GM12878 (cell line): ENCODE measurements at regions of chr6 and their contacts with region 1.

Region 1: GRCh38 chr6:163413345-163414116 is 987 bp upstream of the QKI start:
- DNase-seq: no peak
- ATAC-seq: peak; percentile 71
- H3K4me3 ChIP-seq: peak overlapping the region; percentile 70
- H3K27ac ChIP-seq: peak overlapping the region; percentile 63
- H3K4me1 ChIP-seq: no peaks in the 10 kb centered on the region; the same call in 1 of the 2 replicates
- H3K27me3 ChIP-seq: no peaks in the 10 kb centered on the region
- CTCF ChIP-seq: no peak
- EP300 ChIP-seq: no peak
- POLR2A ChIP-seq: peak; percentile 83
- RAD21 ChIP-seq: no peak

Region 2: DNA sequence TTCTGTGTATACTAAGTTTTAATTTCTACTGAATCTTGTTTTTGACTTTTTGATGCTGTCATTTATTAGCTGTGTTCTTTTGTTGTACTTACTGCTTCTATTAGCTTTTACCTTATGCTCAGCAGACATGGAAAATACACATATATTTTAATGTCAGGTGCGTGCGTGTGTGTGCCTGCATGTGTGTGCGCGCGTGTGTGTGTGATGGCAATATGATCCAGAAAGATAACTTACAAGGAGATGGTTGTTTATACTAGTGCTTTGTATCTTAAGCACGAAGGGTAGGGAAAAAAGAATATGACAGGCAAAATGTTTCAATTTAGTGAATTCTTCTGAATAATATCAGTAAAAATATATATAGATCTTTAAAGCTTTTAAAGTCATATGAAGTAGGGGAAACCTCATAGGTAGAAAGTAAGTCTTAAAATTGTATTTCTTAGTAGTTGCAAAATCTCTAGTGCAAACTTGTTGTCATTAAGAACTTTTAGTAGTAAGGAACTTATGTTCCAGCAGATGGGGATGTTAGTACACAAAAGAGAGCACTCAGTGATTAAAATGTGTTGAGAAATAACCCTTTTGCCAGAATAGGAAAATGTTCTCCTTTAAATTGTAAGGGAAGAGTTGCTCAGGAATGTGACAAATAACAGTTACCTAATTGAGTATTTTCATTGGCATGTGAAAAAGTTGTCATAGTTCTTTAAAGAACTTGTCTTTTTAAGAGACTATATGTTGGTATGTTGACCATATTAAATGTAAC is 14.1 kb after region 1 on chr6:
- CTCF ChIA-PET with region 1: interaction called, 33 read pairs
- POLR2A ChIA-PET with region 1: interaction called, 5 read pairs
- RAD21 ChIA-PET with region 1: interaction called, 9 read pairs
- SMC1A ChIA-PET with region 1: interaction called, 25 read pairs
- in situ Hi-C with region 1: no loop called
- intact Hi-C with region 1: no loop called
- DNase-seq: no peak
- ATAC-seq: peak; percentile 45; the same call in 2 of the 3 replicates
- H3K4me3 ChIP-seq: no peak overlapping the region
- H3K27ac ChIP-seq: no peak overlapping the region
- H3K4me1 ChIP-seq: no peaks in the 10 kb centered on the region
- H3K27me3 ChIP-seq: no peaks in the 10 kb centered on the region
- CTCF ChIP-seq: peak in 1 of 3 experiments; percentile 52; a peak in 2 of 6 replicates
- EP300 ChIP-seq: no peak
- POLR2A ChIP-seq: no peak
- RAD21 ChIP-seq: peak; percentile 76

Region 3: DNA sequence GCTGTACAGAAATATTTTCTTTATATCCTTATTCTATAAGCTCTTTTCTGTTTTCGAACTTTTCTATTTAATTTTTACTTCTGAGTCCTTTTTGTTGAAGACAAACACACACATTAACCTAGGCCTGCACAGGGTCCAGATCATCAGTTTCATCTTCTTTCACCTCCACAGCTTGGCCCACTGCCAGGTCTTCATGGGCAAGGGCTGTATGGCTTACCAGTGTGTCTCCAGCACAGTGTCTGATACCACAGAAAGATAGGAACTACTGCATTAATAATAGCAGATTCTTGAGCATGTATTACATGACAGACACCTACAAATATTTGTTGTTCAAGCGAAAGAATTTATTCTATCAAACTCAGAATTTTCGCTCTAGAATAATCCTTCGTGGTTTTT is 25.4 kb after region 1 on chr6:
- CTCF ChIA-PET with region 1: interaction called, 10 read pairs
- POLR2A ChIA-PET with region 1: no interaction called
- RAD21 ChIA-PET with region 1: interaction called, 3 read pairs
- SMC1A ChIA-PET with region 1: interaction called, 34 read pairs
- in situ Hi-C with region 1: no loop called
- intact Hi-C with region 1: no loop called
- DNase-seq: no peak
- ATAC-seq: peak; percentile 73
- H3K4me3 ChIP-seq: no peak overlapping the region
- H3K27ac ChIP-seq: no peak overlapping the region
- H3K4me1 ChIP-seq: peaks cover 5% of the 10 kb centered on the region; the same call in 1 of the 2 replicates
- H3K27me3 ChIP-seq: no peaks in the 10 kb centered on the region
- CTCF ChIP-seq: no peak
- EP300 ChIP-seq: no peak
- POLR2A ChIP-seq: no peak
- RAD21 ChIP-seq: no peak

Region 4: GRCh38 chr6:163554663-163555062 is 141.1 kb after region 1 on chr6:
- CTCF ChIA-PET with region 1: interaction called, 56 read pairs
- POLR2A ChIA-PET with region 1: interaction called, 4 read pairs
- RAD21 ChIA-PET with region 1: interaction called, 26 read pairs
- SMC1A ChIA-PET with region 1: interaction called, 39 read pairs
- in situ Hi-C with region 1: no loop called
- intact Hi-C with region 1: loop called (anchors 5 kb)
- DNase-seq: no peak
- ATAC-seq: peak; percentile 84
- H3K4me3 ChIP-seq: no peak overlapping the region
- H3K27ac ChIP-seq: no peak overlapping the region
- H3K4me1 ChIP-seq: no peaks in the 10 kb centered on the region; the same call in 1 of the 2 replicates
- H3K27me3 ChIP-seq: no peaks in the 10 kb centered on the region
- CTCF ChIP-seq: peak; percentile 49 to 55 (median 51); a peak in 5 of 6 replicates
- EP300 ChIP-seq: no peak
- POLR2A ChIP-seq: no peak
- RAD21 ChIP-seq: peak; percentile 66

Region 5: GRCh38 chr6:163707401-163708355 is 294.1 kb after region 1 on chr6:
- CTCF ChIA-PET with region 1: no interaction called
- POLR2A ChIA-PET with region 1: no interaction called
- RAD21 ChIA-PET with region 1: no interaction called
- SMC1A ChIA-PET with region 1: no interaction called
- in situ Hi-C with region 1: no loop called
- intact Hi-C with region 1: loop called (anchors 5 kb)
- DNase-seq: no peak
- ATAC-seq: peak; percentile 71
- H3K4me3 ChIP-seq: peak overlapping the region; percentile 42; the same call in 1 of the 2 replicates
- H3K27ac ChIP-seq: peak overlapping the region; percentile 68
- H3K4me1 ChIP-seq: peaks cover 95% of the 10 kb centered on the region
- H3K27me3 ChIP-seq: no peaks in the 10 kb centered on the region
- CTCF ChIP-seq: peak; percentile 5 to 60 (median 55); a peak in 3 of 6 replicates
- EP300 ChIP-seq: no peak
- POLR2A ChIP-seq: no peak
- RAD21 ChIP-seq: peak; percentile 50

Region 6: DNA sequence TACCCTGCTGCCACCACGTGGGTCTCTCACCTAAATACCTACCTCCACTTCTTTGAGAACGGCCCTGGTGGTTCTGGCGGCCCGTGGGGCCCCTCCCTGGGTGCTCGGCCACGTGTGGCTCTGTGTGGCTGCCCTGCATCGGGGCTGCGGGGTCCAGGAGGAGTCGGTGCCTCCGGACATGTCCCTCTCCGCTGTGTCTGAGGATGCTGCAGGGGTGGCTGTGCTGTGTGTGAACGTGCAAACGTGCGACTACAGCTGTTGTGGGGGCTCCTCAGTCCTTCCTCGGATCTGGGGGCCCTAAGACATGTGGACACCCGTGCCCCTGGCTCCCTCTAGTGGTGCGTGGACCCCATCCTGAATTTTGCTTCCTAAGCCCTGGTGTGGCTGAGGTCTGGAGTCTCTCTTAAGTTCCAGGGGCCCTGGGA is 692.8 kb after region 1 on chr6:
- CTCF ChIA-PET with region 1: no interaction called
- POLR2A ChIA-PET with region 1: no interaction called
- RAD21 ChIA-PET with region 1: no interaction called
- SMC1A ChIA-PET with region 1: no interaction called
- in situ Hi-C with region 1: no loop called
- intact Hi-C with region 1: loop called (anchors 10 kb)
- DNase-seq: no peak
- ATAC-seq: peak; percentile 66
- H3K4me3 ChIP-seq: no peak overlapping the region
- H3K27ac ChIP-seq: no peak overlapping the region
- H3K4me1 ChIP-seq: no peaks in the 10 kb centered on the region
- H3K27me3 ChIP-seq: no peaks in the 10 kb centered on the region
- CTCF ChIP-seq: peak; percentile 27 to 38 (median 36); a peak in 3 of 6 replicates
- EP300 ChIP-seq: no peak
- POLR2A ChIP-seq: no peak
- RAD21 ChIP-seq: peak; percentile 51

Region 7: GRCh38 chr6:164927288-164928056 is 1513.9 kb after region 1 on chr6:
- CTCF ChIA-PET with region 1: no interaction called
- POLR2A ChIA-PET with region 1: no interaction called
- RAD21 ChIA-PET with region 1: no interaction called
- SMC1A ChIA-PET with region 1: no interaction called
- in situ Hi-C with region 1: no loop called
- intact Hi-C with region 1: loop called (anchors 5 kb)
- DNase-seq: no peak
- ATAC-seq: peak; percentile 99
- H3K4me3 ChIP-seq: no peak overlapping the region
- H3K27ac ChIP-seq: no peak overlapping the region
- H3K4me1 ChIP-seq: no peaks in the 10 kb centered on the region
- H3K27me3 ChIP-seq: no peaks in the 10 kb centered on the region
- CTCF ChIP-seq: peak; percentile 65 to 97 (median 84)
- EP300 ChIP-seq: no peak
- POLR2A ChIP-seq: no peak
- RAD21 ChIP-seq: peak; percentile 93